Thyroid gland (tissue), 4 donors: ENCODE measurements at regions of chr17 and their contacts with region 1.

Region 1: DNA sequence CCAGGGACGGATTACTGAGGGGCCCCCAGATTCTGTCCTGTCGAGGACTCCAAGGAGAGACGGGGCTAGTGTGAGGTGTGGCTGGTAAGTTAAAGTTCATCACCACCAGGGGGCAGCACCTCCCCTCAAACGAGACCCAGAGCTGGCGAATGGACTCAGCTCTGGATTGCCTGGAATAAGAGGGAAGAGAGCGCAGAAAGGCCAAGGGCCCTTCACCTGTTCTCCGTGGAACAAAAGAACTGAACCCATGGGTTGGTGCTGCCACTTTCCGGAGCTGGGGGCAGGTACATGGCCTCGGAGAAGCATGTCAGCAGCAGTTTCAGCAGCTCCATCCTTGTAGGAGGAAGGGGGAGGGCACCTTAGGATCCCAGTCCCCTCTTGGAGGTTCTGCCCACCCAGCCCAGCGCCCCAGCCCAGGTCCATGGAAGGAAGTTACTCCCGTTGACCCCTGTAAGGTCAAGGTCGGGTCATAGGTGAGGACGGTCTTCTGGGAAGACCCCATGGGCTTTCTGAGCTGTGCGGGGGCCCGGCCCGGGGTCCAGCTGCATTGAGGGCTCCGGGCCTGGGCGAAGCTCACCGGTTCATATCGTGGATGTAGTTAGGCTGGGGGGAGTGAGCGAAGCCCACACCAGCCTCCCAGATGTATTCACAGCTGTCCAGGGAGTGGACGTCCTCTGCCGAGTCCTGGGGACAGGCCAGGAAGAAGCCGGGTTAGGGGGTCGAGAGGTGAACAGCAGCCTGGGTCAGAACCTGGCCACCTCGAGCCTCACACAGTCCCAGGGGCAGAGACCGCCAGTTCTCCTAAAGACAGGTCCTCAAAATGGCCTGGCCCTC is 10.7 kb downstream of the HID1 start:
- DNase-seq: peak; percentile 89 to 92
- H3K4me3 ChIP-seq: no peak overlapping the region
- H3K27ac ChIP-seq: no peak overlapping the region
- H3K4me1 ChIP-seq: peaks cover 0 to 3% of the 10 kb centered on the region in 2 donors
- H3K27me3 ChIP-seq: no peaks in the 10 kb centered on the region
- CTCF ChIP-seq: peak; percentile 53 to 81 (median 73)
- POLR2A ChIP-seq: no peak

Region 2: GRCh38 chr17:74873038-74873873 is 88.6 kb before region 1 on chr17:
- intact Hi-C with region 1: no loop called
- DNase-seq: peak; percentile 99 to 100
- H3K4me3 ChIP-seq: peak overlapping the region in 2 of 3 donors; percentile 48 to 82
- H3K27ac ChIP-seq: peak overlapping the region; percentile 83 to 88 (median 86)
- H3K4me1 ChIP-seq: peaks cover 17 to 37% of the 10 kb centered on the region in 2 donors
- H3K27me3 ChIP-seq: no peaks in the 10 kb centered on the region
- CTCF ChIP-seq: no peak
- POLR2A ChIP-seq: peak; percentile 90 to 92

Region 3: DNA sequence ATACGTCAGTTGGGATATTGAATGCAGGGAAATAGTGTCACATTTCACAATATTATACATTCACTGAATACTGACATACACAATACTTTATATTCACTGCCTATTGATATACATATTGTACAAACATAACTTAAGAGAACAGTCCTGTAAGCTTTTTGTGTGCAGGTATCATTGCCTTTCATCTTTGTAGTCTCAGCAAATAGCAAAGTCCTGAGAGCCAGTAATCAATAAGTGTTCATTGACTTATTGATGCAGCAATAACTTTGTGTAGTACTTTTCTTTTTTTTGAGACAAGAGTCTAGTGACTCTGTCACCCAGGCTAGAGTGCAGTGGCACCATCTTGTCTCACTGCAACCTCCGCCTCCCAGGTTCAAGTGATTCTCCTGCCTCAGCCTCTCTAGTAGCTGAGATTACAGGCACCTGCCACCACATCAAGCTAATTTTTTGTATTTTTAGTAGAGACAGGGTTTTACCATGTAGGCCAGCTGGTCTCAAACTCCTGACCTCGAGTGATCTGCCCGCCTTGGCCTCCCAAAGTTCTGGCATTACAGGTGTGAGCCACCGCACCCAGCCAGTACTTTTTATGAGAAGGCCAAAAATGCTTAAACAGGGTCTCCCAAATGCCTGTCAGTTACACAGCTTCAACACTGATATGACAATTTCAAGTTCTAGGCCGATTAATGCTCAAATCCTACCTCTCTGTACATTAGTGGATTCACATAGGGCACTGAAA is 238.2 kb after region 1 on chr17:
- intact Hi-C with region 1: loop called (anchors 5 kb)
- DNase-seq: no peak
- H3K4me3 ChIP-seq: no peak overlapping the region
- H3K27ac ChIP-seq: no peak overlapping the region
- H3K4me1 ChIP-seq: peaks cover 0 to 5% of the 10 kb centered on the region in 2 donors
- H3K27me3 ChIP-seq: no peaks in the 10 kb centered on the region
- CTCF ChIP-seq: no peak
- POLR2A ChIP-seq: no peak